ENCODE measurements at regions of chr20 and their contacts with region 1.

Region 1: DNA sequence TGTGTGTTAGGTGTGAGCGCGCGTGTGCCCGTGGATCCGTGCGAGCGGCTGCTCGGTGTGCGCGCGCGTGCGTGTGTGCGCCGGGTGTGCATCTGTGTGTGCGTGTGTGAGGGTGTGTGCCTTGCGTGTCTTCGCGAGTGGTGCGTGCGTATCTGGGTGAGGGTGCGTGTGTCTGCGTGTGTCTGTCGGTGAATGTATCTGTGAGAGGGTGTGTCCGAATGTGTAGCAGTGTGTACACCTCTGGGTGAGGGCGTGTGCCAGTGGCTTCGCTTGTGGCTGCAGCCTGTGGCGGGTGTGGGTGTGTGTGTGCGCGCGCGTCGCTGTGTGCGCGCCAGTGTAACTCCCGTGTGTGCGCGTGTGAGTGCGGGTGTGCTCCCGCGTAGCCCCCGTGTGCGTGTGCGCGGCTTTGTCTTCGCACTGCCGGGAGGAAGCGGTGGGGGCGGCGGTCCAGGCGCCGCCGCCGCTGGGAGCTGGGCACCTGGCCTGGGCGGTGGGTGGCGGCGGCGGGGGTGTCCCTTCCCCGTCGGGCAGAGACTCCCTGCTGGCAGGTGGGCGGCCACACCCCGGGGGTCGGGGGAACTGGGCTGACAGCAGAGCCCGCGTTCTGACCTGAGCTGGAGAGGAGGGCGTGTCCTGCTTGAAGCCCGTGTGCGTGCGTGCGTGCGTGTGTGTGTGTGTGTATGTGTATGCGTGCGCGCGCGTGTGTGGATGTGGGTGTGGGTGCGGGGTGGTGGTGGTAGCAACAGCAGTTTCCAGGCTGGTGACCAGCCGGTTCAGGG is 61.3 kb upstream of the EPB41L1 start:
- DNase-seq: peak; percentile 9 to 68 (median 30)
- ATAC-seq: peak; percentile 58
- H3K4me3 ChIP-seq: peak overlapping the region; percentile 58
- H3K4me3 Mint-ChIP-seq: peak overlapping the region; percentile 89
- H3K27ac ChIP-seq: no peak overlapping the region
- H3K27ac Mint-ChIP-seq: peak overlapping the region; percentile 15
- H3K4me1 ChIP-seq: peaks cover 19% of the 10 kb centered on the region
- H3K4me1 Mint-ChIP-seq: peaks cover 17% of the 10 kb centered on the region
- H3K27me3 ChIP-seq: peaks cover 38 to 40% of the 10 kb centered on the region in 2 experiments
- H3K27me3 Mint-ChIP-seq: peaks cover 49% of the 10 kb centered on the region
- CTCF ChIP-seq: no peak

Region 2: GRCh38 chr20:36064658-36065426 is 28.4 kb before region 1 on chr20:
- CTCF ChIA-PET with region 1: no interaction called
- POLR2A ChIA-PET with region 1: no interaction called
- intact Hi-C with region 1: no loop called
- DNase-seq: peak; percentile 86 to 97 (median 94)
- ATAC-seq: peak; percentile 98
- H3K4me3 ChIP-seq: peak overlapping the region; percentile 78
- H3K4me3 Mint-ChIP-seq: peak overlapping the region; percentile 90
- H3K27ac ChIP-seq: peak overlapping the region in 1 of 2 donors; percentile 11
- H3K27ac Mint-ChIP-seq: no peak overlapping the region
- H3K4me1 ChIP-seq: peaks cover 19% of the 10 kb centered on the region
- H3K4me1 Mint-ChIP-seq: peaks cover 5% of the 10 kb centered on the region
- H3K27me3 ChIP-seq: no peaks in the 10 kb centered on the region
- H3K27me3 Mint-ChIP-seq: no peaks in the 10 kb centered on the region
- CTCF ChIP-seq: no peak

Region 3: GRCh38 chr20:36132802-36133211 is 39.6 kb after region 1 on chr20:
- CTCF ChIA-PET with region 1: no interaction called
- POLR2A ChIA-PET with region 1: no interaction called
- intact Hi-C with region 1: no loop called
- DNase-seq: no peak
- ATAC-seq: no peak
- H3K4me3 ChIP-seq: no peak overlapping the region
- H3K4me3 Mint-ChIP-seq: no peak overlapping the region
- H3K27ac ChIP-seq: no peak overlapping the region
- H3K27ac Mint-ChIP-seq: no peak overlapping the region
- H3K4me1 ChIP-seq: no peaks in the 10 kb centered on the region
- H3K4me1 Mint-ChIP-seq: no peaks in the 10 kb centered on the region
- H3K27me3 ChIP-seq: no peaks in the 10 kb centered on the region
- H3K27me3 Mint-ChIP-seq: no peaks in the 10 kb centered on the region
- CTCF ChIP-seq: no peak

Region 4: GRCh38 chr20:36314734-36315541 is 221.7 kb after region 1 on chr20:
- CTCF ChIA-PET with region 1: no interaction called
- POLR2A ChIA-PET with region 1: no interaction called
- intact Hi-C with region 1: loop called in 1 of 2 experiments (anchors 10 kb)
- DNase-seq: peak in 1 of 14 experiments; percentile 24
- ATAC-seq: no peak
- H3K4me3 ChIP-seq: no peak overlapping the region
- H3K4me3 Mint-ChIP-seq: no peak overlapping the region
- H3K27ac ChIP-seq: no peak overlapping the region
- H3K27ac Mint-ChIP-seq: no peak overlapping the region
- H3K4me1 ChIP-seq: no peaks in the 10 kb centered on the region
- H3K4me1 Mint-ChIP-seq: no peaks in the 10 kb centered on the region
- H3K27me3 ChIP-seq: peaks cover 7 to 20% of the 10 kb centered on the region in 2 experiments
- H3K27me3 Mint-ChIP-seq: peaks cover 31% of the 10 kb centered on the region
- CTCF ChIP-seq: no peak

Region 5: DNA sequence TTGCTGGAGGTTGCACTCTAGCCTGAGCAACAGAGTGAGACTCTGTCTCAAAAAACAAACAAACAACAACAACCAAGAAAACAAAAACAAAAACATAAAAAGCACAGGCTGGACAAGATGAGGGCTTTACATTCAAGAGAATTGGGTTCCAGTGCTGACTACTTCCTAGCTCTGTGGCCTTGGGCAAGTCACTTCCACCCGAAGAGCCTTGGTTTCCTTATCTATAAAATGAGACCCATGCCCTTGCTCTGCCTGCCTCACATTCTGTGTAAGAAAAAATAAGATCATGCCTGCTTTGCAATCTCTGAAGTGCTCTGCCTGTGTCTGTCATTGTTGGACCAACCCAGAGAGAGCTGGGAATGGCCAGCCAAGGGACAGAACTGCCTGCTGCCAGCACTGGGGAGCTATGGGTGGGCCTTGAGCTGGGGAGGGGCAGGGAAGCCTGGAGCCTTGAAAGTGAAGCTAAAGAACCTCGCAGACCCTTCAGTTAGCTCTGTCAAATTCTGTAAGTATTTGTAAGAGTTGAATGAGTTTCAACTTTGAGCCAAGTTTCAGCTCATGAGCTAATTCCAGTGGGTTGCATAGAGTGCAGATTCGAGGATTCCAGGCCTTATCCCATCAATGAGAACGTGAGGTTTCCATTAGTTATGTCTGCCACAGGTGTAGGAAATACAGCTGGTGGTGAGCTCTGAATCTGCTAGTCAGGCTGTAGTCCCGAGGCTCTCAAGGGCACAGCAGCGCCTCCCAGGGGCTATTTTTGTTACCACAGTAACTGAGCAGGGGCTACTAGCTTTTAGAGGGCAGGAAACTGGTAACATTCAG is 306.1 kb after region 1 on chr20:
- CTCF ChIA-PET with region 1: no interaction called
- POLR2A ChIA-PET with region 1: no interaction called
- intact Hi-C with region 1: no loop called
- DNase-seq: peak in 9 of 14 experiments; percentile 5 to 43 (median 22)
- ATAC-seq: peak; percentile 78
- H3K4me3 ChIP-seq: no peak overlapping the region
- H3K4me3 Mint-ChIP-seq: no peak overlapping the region
- H3K27ac ChIP-seq: no peak overlapping the region
- H3K27ac Mint-ChIP-seq: no peak overlapping the region
- H3K4me1 ChIP-seq: no peaks in the 10 kb centered on the region
- H3K4me1 Mint-ChIP-seq: no peaks in the 10 kb centered on the region
- H3K27me3 ChIP-seq: peaks cover 9 to 22% of the 10 kb centered on the region in 2 experiments
- H3K27me3 Mint-ChIP-seq: peaks cover 55% of the 10 kb centered on the region
- CTCF ChIP-seq: no peak

Measured in CD4-positive, alpha-beta T cell (primary cell).